ENCODE measurements at regions of chr4 and their contacts with region 1.

Region 1: DNA sequence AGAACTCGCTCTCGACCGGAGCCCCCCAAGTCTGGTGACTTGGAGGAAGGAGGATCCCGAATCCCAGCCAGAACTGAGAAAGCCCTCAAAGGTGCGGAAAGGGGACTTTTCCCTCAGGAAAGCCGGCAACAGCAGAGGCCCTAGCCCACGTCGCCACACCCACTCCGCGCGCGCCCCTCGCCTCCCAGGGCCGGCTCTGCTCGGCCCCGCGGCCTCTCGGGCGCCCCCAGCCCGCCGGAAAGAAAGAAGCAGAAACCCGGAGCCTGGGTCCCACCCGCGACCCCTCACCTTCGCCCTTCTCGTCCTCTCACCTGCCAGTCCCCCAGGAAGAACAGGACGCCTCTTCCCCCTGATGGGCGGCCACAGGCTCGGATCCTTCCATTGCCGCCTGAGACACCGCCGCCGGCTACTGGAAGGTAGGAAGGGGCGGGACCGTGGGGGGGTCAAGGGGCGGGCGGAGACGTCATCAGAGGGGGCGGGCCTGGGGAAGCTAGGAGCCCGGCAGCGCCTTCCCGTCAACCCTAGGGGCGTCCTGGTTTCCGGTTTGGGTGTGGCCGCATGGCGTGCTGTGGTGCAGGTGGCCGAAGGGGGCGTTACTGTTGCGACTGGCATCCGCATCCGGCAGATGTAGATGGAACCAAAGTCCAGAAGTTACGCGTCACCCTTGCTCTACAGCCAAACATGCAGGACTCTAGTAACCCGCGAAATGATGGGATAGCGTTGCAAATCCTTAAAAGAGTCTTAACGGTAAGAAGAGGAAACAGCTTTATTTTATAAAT is at the start of gene UBA6:
- DNase-seq: peak; percentile 98
- H3K4me3 Mint-ChIP-seq: peak within 1 kb of the TSS; percentile 96
- H3K27ac Mint-ChIP-seq: peak within 1 kb of the TSS; percentile 97
- H3K4me1 Mint-ChIP-seq: peaks cover 46% of the 10 kb centered on the region
- H3K27me3 Mint-ChIP-seq: no peaks in the 10 kb centered on the region
- total RNA-seq, gene UBA6: 78.2 and 85.4 TPM in 2 replicates

Region 2: DNA sequence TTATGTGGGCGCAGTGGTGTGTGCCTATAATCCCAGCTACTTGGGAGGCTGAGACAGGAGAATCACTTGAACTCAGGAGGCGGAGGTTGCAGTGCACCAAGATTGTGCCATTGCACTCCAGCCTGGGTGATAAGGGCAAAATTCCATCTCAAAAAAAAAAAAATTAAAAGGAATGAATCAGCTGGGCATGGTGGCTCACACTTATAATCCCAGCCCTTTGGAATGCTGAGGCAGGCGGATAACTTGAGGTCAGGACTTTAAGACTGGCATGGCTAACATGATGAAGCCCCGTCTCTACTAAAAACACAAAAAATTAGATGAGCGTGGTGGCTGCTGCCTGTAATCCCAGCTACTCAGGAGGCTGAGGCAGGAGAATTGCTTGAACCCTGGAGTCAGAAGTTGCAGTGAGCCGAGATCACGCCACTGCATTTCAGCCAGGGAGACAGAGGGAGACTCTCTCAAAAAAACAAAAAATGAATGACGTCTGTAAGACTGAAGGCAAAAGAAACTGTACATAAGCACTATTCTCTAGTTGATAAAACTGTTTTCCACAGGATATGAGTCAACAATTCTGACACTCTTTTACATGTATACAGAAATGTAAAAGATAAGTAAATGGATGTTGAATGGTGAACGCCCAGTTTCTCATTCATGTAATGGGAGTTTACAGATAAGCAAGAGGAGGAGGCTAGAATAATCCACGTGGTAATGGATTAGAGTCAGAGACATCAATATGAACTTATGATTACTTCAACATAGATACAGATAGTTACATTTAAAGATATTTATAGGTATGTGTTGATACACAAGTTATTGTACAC is 177.9 kb before region 1 on chr4:
- intact Hi-C with region 1: loop called (anchors 1 kb)
- DNase-seq: peak; percentile 69
- H3K4me3 Mint-ChIP-seq: peak overlapping the region; percentile 66
- H3K27ac Mint-ChIP-seq: peak overlapping the region; percentile 97
- H3K4me1 Mint-ChIP-seq: peaks cover 55% of the 10 kb centered on the region
- H3K27me3 Mint-ChIP-seq: no peaks in the 10 kb centered on the region

Region 3: GRCh38 chr4:67684839-67685531 is 15.9 kb before region 1 on chr4:
- intact Hi-C with region 1: loop called (anchors 2 kb)
- DNase-seq: no peak
- H3K4me3 Mint-ChIP-seq: peak overlapping the region; percentile 18
- H3K27ac Mint-ChIP-seq: peak overlapping the region; percentile 69
- H3K4me1 Mint-ChIP-seq: peaks cover 38% of the 10 kb centered on the region
- H3K27me3 Mint-ChIP-seq: no peaks in the 10 kb centered on the region

Region 4: GRCh38 chr4:67746797-67747495 is 46.0 kb after region 1 on chr4:
- intact Hi-C with region 1: loop called (anchors 5 kb)
- DNase-seq: no peak
- H3K4me3 Mint-ChIP-seq: no peak overlapping the region
- H3K27ac Mint-ChIP-seq: no peak overlapping the region
- H3K4me1 Mint-ChIP-seq: peaks cover 16% of the 10 kb centered on the region
- H3K27me3 Mint-ChIP-seq: no peaks in the 10 kb centered on the region

Region 5: DNA sequence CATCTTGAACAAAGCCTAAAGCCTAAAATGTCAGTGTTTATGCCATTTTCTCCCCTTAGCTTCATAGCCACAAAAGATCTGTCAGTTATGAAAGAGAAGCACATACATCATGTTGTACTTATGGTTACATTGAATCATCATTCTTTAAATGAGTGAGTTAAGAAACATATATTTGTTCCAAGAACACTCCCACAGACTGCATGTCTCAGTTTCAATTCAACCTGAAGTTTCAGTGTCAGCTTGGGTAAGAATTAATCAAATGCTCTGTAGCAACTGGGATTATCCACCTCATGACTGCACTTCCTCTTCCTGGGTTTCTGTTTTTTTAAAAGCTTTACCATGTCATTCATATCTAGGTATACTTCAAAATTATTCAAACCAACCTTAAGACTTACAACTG is 548.5 kb after region 1 on chr4:
- intact Hi-C with region 1: loop called (anchors 10 kb)
- DNase-seq: no peak
- H3K4me3 Mint-ChIP-seq: peak overlapping the region; percentile 64
- H3K27ac Mint-ChIP-seq: peak overlapping the region; percentile 93
- H3K4me1 Mint-ChIP-seq: peaks cover 10% of the 10 kb centered on the region
- H3K27me3 Mint-ChIP-seq: no peaks in the 10 kb centered on the region